ENCODE measurements at regions of chr3 and their contacts with region 1.

Region 1: DNA sequence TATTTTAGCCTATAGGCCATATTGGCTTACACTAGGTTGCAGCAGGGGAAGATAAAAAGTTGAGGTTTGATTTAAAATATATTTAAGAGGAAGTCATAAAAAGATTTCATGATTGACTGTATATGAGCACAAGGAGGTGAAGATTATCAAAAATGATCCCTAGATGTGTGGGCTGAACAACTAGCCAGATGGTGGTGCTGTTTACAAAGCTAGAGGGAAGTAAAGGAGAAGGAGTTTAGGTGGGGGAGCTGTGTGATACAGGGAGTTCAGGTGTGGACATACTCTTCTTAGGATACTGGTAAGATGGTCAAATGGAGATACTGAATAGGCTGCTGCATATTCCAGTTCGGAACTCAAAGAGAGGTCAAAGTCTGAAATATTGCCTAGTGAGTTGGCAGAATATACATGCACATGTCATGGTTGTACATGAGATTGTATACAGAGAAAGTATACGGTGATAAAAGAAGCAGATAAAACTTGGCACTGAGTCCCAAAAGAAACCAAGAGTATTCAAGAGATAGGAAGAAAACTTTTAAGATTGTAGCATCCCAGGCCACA is 727.8 kb downstream of the NLGN1 start:
- DNase-seq: peak; percentile 60
- H3K4me3 ChIP-seq: no peak overlapping the region
- H3K27ac ChIP-seq: no peak overlapping the region
- H3K4me1 ChIP-seq: peaks cover 5% of the 10 kb centered on the region
- H3K27me3 ChIP-seq: no peaks in the 10 kb centered on the region
- CTCF ChIP-seq: peak; percentile 36 to 54
- POLR2A ChIP-seq: no peak

Region 2: DNA sequence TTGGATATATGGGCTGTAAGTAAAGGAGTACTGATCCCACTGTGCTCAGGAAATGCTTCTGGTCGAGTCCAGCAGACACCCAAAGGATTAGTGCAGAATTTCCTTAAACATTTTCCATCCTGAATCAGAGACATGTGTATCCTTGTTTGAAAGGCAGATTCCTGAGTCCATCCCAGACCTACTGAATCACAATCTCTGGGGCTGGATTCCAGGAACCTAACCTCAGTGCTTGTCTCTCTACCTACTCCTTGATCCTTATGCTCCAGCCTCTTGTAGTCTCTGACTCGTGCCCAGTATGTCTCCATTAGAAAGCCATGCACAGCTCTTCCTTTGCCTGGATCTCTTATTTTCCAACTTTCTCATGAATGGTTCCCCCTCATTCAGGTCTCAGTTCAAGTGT is 142.0 kb before region 1 on chr3:
- CTCF ChIA-PET with region 1: no interaction called
- POLR2A ChIA-PET with region 1: no interaction called
- dilution Hi-C with region 1: no loop called
- intact Hi-C with region 1: no loop called
- DNase-seq: no peak
- H3K4me3 ChIP-seq: no peak overlapping the region
- H3K27ac ChIP-seq: no peak overlapping the region
- H3K4me1 ChIP-seq: no peaks in the 10 kb centered on the region
- H3K27me3 ChIP-seq: no peaks in the 10 kb centered on the region
- CTCF ChIP-seq: no peak
- POLR2A ChIP-seq: no peak

Region 3: DNA sequence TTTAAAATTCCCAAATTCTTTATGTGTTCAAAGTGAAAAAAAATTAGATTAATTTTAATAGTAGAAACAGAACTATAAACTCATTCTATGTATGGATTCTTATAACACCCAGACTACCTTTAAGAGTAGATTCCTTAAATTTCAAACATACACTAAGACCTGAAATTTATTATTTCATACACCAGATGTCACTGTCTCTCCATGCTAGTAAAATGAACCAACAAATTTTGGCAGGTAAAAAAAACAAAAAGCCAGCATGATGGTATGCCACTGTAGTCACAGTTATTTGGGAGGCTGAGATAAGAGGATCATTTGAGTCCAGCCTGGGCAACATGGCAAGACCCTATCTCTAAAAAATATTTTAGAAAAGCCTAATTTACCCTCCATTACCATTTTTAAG is 272.5 kb after region 1 on chr3:
- CTCF ChIA-PET with region 1: interaction called, 3 read pairs
- POLR2A ChIA-PET with region 1: no interaction called
- dilution Hi-C with region 1: no loop called
- intact Hi-C with region 1: loop called (anchors 5 kb)
- DNase-seq: peak; percentile 44
- H3K4me3 ChIP-seq: no peak overlapping the region
- H3K27ac ChIP-seq: no peak overlapping the region
- H3K4me1 ChIP-seq: no peaks in the 10 kb centered on the region
- H3K27me3 ChIP-seq: no peaks in the 10 kb centered on the region
- CTCF ChIP-seq: no peak
- POLR2A ChIP-seq: no peak

Region 4: DNA sequence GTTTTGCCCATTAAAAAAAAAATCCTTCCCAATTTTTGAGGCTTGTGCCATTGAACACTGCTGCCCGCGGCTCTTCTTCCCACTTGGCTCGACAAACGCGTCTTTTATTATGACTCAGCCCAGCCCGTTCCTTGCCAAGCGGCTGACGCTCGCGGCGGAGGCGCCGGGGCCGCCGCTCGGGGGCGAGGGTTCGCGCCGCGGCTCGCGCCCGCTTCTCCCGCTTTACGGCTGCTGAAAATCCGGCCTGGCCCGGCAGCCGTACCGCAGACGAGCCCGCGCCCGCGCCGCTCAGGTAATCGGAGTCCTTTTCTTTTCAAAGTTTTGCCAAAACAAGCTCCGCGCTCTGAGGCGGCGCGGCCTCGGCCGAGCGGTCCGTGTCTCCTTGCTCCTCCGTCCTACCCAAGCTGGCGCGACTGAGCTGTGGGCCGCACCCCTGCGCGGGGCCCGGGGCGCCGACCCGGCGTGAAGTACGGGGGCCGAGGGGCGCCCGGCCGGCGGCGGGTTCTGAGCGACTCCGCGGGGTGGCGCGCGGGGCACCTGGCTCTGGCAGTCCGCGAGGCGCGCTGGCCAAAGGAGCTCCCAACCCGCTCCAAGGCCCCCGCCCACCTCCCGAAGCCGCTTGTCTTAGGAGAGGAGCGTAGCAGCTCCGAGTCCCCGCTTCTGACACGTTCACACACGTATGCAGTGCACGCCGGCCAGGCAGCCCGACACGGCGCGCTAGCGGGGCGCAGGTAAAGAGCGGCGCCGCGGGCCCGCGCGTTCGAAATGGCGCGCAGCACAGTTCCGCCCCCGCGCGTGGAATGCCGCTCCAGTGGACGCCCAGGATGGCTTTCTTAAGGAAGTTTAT is 315.6 kb after region 1 on chr3:
- CTCF ChIA-PET with region 1: no interaction called
- POLR2A ChIA-PET with region 1: no interaction called
- dilution Hi-C with region 1: no loop called
- intact Hi-C with region 1: loop called (anchors 10 kb)
- DNase-seq: peak; percentile 90
- H3K4me3 ChIP-seq: peak overlapping the region; percentile 74 to 91 (median 78)
- H3K27ac ChIP-seq: peak overlapping the region; percentile 90
- H3K4me1 ChIP-seq: peaks cover 21% of the 10 kb centered on the region
- H3K27me3 ChIP-seq: no peaks in the 10 kb centered on the region
- CTCF ChIP-seq: no peak
- POLR2A ChIP-seq: peak; percentile 39

Region 5: GRCh38 chr3:175146258-175146657 is 1020.9 kb after region 1 on chr3:
- CTCF ChIA-PET with region 1: interaction called, 11 read pairs
- POLR2A ChIA-PET with region 1: no interaction called
- dilution Hi-C with region 1: no loop called
- intact Hi-C with region 1: no loop called
- DNase-seq: peak; percentile 31
- H3K4me3 ChIP-seq: no peak overlapping the region
- H3K27ac ChIP-seq: no peak overlapping the region
- H3K4me1 ChIP-seq: no peaks in the 10 kb centered on the region
- H3K27me3 ChIP-seq: no peaks in the 10 kb centered on the region
- CTCF ChIP-seq: peak in 1 of 2 donors; percentile 11
- POLR2A ChIP-seq: no peak

Region 6: DNA sequence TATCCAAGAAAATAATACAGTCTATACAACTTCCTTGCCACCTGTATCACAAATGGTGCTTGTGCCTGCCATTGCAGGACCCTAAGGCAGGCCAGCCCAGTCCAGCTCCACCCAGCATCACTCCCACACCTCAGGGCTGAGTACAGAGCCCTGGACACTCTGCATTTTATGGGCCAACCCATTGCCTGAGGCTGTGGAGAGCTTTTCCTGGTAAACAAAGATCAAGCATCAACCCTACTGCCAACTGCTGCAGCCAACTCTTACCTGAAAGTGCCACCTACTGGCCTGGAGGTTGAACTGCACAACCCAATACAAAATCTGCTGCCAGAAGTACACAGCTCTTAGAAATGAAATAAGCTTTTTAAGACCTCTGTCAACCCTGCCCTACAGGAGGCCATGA is 1816.0 kb after region 1 on chr3:
- CTCF ChIA-PET with region 1: no interaction called
- POLR2A ChIA-PET with region 1: no interaction called
- dilution Hi-C with region 1: no loop called
- intact Hi-C with region 1: loop called (anchors 5 kb)
- DNase-seq: peak; percentile 11
- H3K4me3 ChIP-seq: no peak overlapping the region
- H3K27ac ChIP-seq: no peak overlapping the region
- H3K4me1 ChIP-seq: no peaks in the 10 kb centered on the region
- H3K27me3 ChIP-seq: no peaks in the 10 kb centered on the region
- CTCF ChIP-seq: peak; percentile 29 to 33
- POLR2A ChIP-seq: no peak

Measured in endothelial cell of umbilical vein (primary cell).